CD4-positive, alpha-beta memory T cell (primary cell): ENCODE measurements at regions of chr7 and their contacts with region 1.

Region 1: DNA sequence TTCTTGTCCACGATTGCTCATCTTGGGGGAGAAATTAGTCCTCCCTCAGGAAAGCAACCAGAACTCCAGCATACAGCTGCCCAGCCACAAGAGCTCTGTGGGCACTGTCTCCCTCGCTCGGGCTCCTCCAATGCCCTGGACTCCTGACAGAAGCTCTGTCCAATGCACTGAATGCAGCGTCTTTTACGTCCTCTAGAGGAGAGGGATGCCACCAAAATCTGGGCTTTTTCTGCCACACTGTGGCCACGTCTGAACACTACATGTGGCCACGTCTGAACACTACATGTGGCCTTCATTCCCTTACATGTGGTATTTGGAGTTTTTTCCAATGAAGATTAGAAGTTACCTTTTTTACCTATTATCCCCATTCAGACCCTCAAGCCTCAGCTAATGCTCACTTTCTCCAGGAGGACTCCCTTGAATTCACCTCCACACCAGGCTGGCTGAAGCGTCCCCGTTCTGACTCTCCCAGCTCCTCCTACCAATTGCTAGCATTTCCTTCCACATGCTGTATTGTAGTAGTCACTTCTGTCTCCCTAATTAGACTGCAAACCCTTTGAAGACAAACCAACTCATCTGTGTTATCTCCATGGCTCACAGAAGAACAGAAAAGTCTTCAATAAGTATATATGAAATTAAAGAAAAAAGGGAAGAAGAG is 134.3 kb upstream of the PDE1C start:
- DNase-seq: no peak
- H3K4me3 ChIP-seq: no peak overlapping the region
- H3K4me3 Mint-ChIP-seq: no peak overlapping the region
- H3K27ac ChIP-seq: no peak overlapping the region
- H3K27ac Mint-ChIP-seq: no peak overlapping the region
- H3K4me1 ChIP-seq: no peaks in the 10 kb centered on the region
- H3K4me1 Mint-ChIP-seq: no peaks in the 10 kb centered on the region
- H3K27me3 ChIP-seq: no peaks in the 10 kb centered on the region
- H3K27me3 Mint-ChIP-seq: peaks cover 1 to 2% of the 10 kb centered on the region in 2 donors

Region 2: GRCh38 chr7:32043714-32044113 is 160.8 kb before region 1 on chr7:
- CTCF ChIA-PET with region 1: no interaction called
- POLR2A ChIA-PET with region 1: no interaction called
- intact Hi-C with region 1: no loop called
- DNase-seq: no peak
- H3K4me3 ChIP-seq: no peak overlapping the region
- H3K4me3 Mint-ChIP-seq: no peak overlapping the region
- H3K27ac ChIP-seq: no peak overlapping the region
- H3K27ac Mint-ChIP-seq: no peak overlapping the region
- H3K4me1 ChIP-seq: no peaks in the 10 kb centered on the region
- H3K4me1 Mint-ChIP-seq: no peaks in the 10 kb centered on the region
- H3K27me3 ChIP-seq: no peaks in the 10 kb centered on the region
- H3K27me3 Mint-ChIP-seq: no peaks in the 10 kb centered on the region

Region 3: GRCh38 chr7:32126843-32127242 is 77.6 kb before region 1 on chr7:
- CTCF ChIA-PET with region 1: no interaction called
- POLR2A ChIA-PET with region 1: no interaction called
- intact Hi-C with region 1: no loop called
- DNase-seq: no peak
- H3K4me3 ChIP-seq: no peak overlapping the region
- H3K4me3 Mint-ChIP-seq: no peak overlapping the region
- H3K27ac ChIP-seq: no peak overlapping the region
- H3K27ac Mint-ChIP-seq: no peak overlapping the region
- H3K4me1 ChIP-seq: no peaks in the 10 kb centered on the region
- H3K4me1 Mint-ChIP-seq: no peaks in the 10 kb centered on the region
- H3K27me3 ChIP-seq: no peaks in the 10 kb centered on the region
- H3K27me3 Mint-ChIP-seq: no peaks in the 10 kb centered on the region

Region 4: GRCh38 chr7:32221736-32222135 is 17.2 kb after region 1 on chr7:
- CTCF ChIA-PET with region 1: interaction called, 24 read pairs
- POLR2A ChIA-PET with region 1: no interaction called
- intact Hi-C with region 1: no loop called
- DNase-seq: no peak
- H3K4me3 ChIP-seq: no peak overlapping the region
- H3K4me3 Mint-ChIP-seq: no peak overlapping the region
- H3K27ac ChIP-seq: no peak overlapping the region
- H3K27ac Mint-ChIP-seq: no peak overlapping the region
- H3K4me1 ChIP-seq: no peaks in the 10 kb centered on the region
- H3K4me1 Mint-ChIP-seq: no peaks in the 10 kb centered on the region
- H3K27me3 ChIP-seq: no peaks in the 10 kb centered on the region
- H3K27me3 Mint-ChIP-seq: peaks cover 0 to 1% of the 10 kb centered on the region in 2 donors

Region 5: GRCh38 chr7:32248522-32248921 is 44.0 kb after region 1 on chr7:
- CTCF ChIA-PET with region 1: no interaction called
- POLR2A ChIA-PET with region 1: no interaction called
- intact Hi-C with region 1: no loop called
- DNase-seq: no peak
- H3K4me3 ChIP-seq: no peak overlapping the region
- H3K4me3 Mint-ChIP-seq: no peak overlapping the region
- H3K27ac ChIP-seq: no peak overlapping the region
- H3K27ac Mint-ChIP-seq: no peak overlapping the region
- H3K4me1 ChIP-seq: no peaks in the 10 kb centered on the region
- H3K4me1 Mint-ChIP-seq: no peaks in the 10 kb centered on the region
- H3K27me3 ChIP-seq: no peaks in the 10 kb centered on the region
- H3K27me3 Mint-ChIP-seq: peaks cover 1 to 3% of the 10 kb centered on the region in 2 donors

Region 6: DNA sequence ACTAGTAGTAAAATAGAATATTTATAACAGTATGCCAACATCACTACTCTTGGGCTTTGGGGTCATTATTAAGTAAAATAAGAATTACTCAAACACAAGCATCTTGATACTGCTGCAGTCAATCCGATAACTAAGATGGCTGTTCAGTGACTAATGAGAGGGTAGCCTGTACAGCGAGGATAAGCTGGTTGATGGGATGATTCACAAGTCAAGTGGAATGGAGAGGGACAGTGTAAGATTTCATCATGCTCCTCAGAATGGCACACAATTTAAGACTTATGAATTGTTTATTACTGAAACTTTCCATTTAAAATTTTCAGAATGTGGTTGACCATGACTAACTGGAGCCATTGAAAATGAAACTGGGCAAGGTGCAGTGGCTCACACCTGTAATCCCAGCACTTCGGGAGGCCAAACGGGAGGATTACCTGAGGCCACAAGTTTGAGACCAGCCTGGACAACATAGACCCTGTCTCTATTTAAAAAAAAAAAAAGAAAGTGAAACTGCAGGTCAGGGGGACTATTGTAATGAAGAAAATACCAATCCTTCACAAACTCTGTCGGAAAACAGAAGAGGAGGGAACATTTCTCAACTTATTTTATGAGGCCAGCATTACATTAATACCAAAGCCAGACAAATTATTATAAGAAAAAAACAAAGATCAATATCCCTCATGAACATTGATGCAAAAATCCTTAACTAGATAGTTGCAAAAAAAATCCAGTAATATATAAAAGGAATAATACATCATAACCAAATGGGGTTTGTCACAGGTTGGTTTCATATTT is 302.0 kb after region 1 on chr7:
- CTCF ChIA-PET with region 1: no interaction called
- POLR2A ChIA-PET with region 1: no interaction called
- intact Hi-C with region 1: no loop called
- DNase-seq: no peak
- H3K4me3 ChIP-seq: no peak overlapping the region
- H3K4me3 Mint-ChIP-seq: peak overlapping the region in 7 of 8 donors; percentile 18 to 66 (median 58)
- H3K27ac ChIP-seq: no peak overlapping the region
- H3K27ac Mint-ChIP-seq: peak overlapping the region in 3 of 7 donors; percentile 18 to 26 (median 24)
- H3K4me1 ChIP-seq: peaks cover 36% of the 10 kb centered on the region
- H3K4me1 Mint-ChIP-seq: peaks cover 33 to 63% (median 49%) of the 10 kb centered on the region in 4 donors
- H3K27me3 ChIP-seq: no peaks in the 10 kb centered on the region
- H3K27me3 Mint-ChIP-seq: no peaks in the 10 kb centered on the region